HCT116 (cell line): ENCODE measurements at regions of chr10 and their contacts with region 1.

Region 1: DNA sequence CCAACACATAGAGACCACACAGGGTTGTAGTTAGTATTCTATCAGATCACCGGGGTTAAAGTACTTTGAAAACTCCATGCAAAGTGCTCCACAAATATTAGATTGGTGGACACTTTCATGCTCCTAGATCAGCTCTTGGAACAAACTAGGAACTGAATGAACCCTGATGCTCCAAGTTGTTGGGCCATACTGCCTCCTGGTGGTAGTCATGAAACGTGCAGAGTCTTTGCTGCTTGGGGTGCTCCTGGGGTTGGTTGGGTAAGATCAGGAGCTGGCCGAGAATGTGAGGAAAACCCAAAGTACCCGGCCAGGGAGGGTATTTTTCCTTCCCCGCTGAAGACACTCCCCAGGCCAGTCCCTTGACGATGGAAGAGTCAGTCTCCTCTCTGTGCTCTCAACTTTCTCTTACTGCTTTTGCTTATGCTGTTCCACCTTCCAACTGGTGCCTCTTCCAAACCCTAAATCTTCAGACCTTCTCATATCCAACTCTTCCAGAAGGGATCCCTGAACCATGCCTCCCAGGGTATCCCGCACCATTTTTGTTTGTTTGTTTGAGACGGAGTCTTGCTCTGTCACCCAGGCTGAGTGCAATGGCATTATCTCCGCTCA is 920 bp upstream of the RPEL1 start:
- DNase-seq: peak; percentile 82
- ATAC-seq: peak; percentile 73
- H3K4me3 ChIP-seq: no peak overlapping the region
- H3K27ac ChIP-seq: no peak overlapping the region
- H3K4me1 ChIP-seq: peaks cover 27 to 36% of the 10 kb centered on the region in 2 experiments
- H3K27me3 ChIP-seq: no peaks in the 10 kb centered on the region
- CTCF ChIP-seq: peak in 2 of 3 experiments; percentile 95 to 99; a peak in 4 of 6 replicates
- POLR2A ChIP-seq: no peak
- RAD21 ChIP-seq: no peak

Region 2: GRCh38 chr10:102729029-102730026 is 515.4 kb before region 1 on chr10:
- CTCF ChIA-PET with region 1: no interaction called
- POLR2A ChIA-PET with region 1: no interaction called
- RAD21 ChIA-PET with region 1: no interaction called
- intact Hi-C with region 1: loop called (anchors 5 kb)
- DNase-seq: peak; percentile 49
- ATAC-seq: peak; percentile 99
- H3K4me3 ChIP-seq: no peak overlapping the region
- H3K27ac ChIP-seq: no peak overlapping the region
- H3K4me1 ChIP-seq: no peaks in the 10 kb centered on the region
- H3K27me3 ChIP-seq: no peaks in the 10 kb centered on the region
- CTCF ChIP-seq: peak; percentile 83 to 99 (median 99)
- POLR2A ChIP-seq: no peak
- RAD21 ChIP-seq: peak; percentile 95

Region 3: GRCh38 chr10:102894466-102895213 is 350.1 kb before region 1 on chr10:
- CTCF ChIA-PET with region 1: no interaction called
- POLR2A ChIA-PET with region 1: no interaction called
- RAD21 ChIA-PET with region 1: no interaction called
- intact Hi-C with region 1: no loop called
- DNase-seq: no peak
- ATAC-seq: no peak
- H3K4me3 ChIP-seq: no peak overlapping the region
- H3K27ac ChIP-seq: no peak overlapping the region
- H3K4me1 ChIP-seq: no peaks in the 10 kb centered on the region
- H3K27me3 ChIP-seq: no peaks in the 10 kb centered on the region
- CTCF ChIP-seq: no peak
- POLR2A ChIP-seq: no peak
- RAD21 ChIP-seq: no peak

Region 4: DNA sequence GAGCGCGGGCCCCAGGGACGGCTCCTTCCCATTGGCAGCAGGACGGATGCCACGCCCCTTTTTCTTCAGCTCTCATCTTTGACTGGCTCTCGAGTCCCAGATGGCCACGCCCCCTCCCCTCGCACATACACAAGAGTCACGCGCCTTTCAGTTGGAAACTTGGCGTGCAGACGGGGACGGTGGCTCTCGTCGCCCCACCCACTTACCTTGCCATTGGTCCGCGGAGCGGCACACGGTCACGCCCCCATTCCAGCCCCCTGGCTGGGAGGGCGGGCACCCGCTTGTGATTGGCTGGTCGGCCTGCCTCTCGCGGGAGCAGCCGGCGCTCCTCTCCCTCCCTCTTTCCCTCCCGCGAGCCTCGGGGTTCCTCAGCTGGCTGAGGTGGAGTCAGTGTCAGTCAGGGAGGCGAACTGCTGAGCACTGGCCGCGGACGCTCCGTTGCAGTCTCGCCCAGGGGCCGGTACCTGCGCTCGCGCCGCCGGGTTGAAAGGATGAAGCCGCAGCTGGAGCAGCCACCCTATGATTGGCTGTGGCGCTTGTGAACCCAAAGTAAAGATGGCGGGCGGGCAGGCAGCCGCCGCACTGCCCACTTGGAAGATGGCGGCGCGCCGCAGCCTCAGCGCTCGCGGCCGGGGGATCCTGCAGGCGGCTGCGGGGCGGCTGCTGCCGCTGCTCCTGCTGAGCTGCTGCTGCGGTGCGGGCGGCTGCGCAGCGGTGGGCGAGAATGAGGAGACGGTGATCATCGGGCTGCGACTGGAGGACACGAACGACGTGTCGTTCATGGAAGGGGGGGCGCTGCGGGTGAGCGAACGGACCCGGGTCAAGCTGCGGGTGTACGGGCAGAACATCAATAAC is 326.6 kb before region 1 on chr10 and contains the start of gene CNNM2:
- CTCF ChIA-PET with region 1: interaction called, 59 read pairs
- POLR2A ChIA-PET with region 1: interaction called, 4 read pairs
- RAD21 ChIA-PET with region 1: interaction called, 27 to 29 read pairs
- intact Hi-C with region 1: loop called (anchors 1 kb)
- DNase-seq: peak; percentile 100
- ATAC-seq: peak; percentile 87
- H3K4me3 ChIP-seq: peak within 1 kb of the TSS; percentile 71 to 85
- H3K27ac ChIP-seq: peak within 1 kb of the TSS; percentile 77
- H3K4me1 ChIP-seq: peaks cover 12 to 24% of the 10 kb centered on the region in 2 experiments
- H3K27me3 ChIP-seq: no peaks in the 10 kb centered on the region
- CTCF ChIP-seq: no peak
- POLR2A ChIP-seq: peak; percentile 86
- RAD21 ChIP-seq: no peak
- total RNA-seq, gene CNNM2: 23.1 TPM

Region 5: DNA sequence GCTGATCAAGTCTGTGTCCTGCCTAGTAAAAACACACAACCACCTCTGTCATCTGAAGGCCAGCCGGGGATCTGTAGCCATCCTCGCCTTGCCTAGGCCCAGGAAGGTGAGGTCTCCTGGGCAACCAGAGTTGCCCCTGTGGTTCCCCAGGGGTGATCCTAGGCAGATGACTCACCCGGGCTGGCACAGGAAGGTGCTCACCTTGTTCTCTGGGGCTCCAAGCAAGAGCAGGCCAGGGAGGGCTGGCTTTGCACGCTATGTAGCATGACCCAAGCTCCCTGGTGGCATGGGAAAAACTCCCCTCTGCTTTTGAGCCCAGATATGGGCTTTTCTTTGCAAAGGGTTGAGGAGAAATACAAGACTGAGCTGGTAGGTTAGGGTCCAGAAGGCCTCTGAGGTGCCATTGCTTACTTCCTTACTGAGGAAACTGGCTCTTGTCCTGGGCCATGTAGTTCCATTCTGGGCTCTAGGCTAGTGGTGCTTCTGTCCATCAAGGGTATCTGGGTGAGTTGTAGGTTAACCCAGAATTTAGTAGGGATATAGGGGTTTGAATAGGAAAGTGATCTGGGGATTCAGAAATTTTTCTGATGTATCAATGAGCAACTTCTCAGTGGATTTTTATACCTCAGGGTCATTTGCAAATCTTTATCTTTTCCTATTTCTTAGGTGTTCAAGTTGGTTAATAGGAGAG is 163.7 kb before region 1 on chr10:
- CTCF ChIA-PET with region 1: interaction called, 8 read pairs
- POLR2A ChIA-PET with region 1: no interaction called
- RAD21 ChIA-PET with region 1: interaction called in 1 of 2 experiments, 3 read pairs
- intact Hi-C with region 1: loop called (anchors 5 kb)
- DNase-seq: no peak
- ATAC-seq: peak; percentile 44
- H3K4me3 ChIP-seq: no peak overlapping the region
- H3K27ac ChIP-seq: no peak overlapping the region
- H3K4me1 ChIP-seq: peaks cover 0 to 5% of the 10 kb centered on the region in 2 experiments; a peak in 1 of 4 replicates
- H3K27me3 ChIP-seq: no peaks in the 10 kb centered on the region
- CTCF ChIP-seq: no peak
- POLR2A ChIP-seq: no peak
- RAD21 ChIP-seq: no peak

Region 6: DNA sequence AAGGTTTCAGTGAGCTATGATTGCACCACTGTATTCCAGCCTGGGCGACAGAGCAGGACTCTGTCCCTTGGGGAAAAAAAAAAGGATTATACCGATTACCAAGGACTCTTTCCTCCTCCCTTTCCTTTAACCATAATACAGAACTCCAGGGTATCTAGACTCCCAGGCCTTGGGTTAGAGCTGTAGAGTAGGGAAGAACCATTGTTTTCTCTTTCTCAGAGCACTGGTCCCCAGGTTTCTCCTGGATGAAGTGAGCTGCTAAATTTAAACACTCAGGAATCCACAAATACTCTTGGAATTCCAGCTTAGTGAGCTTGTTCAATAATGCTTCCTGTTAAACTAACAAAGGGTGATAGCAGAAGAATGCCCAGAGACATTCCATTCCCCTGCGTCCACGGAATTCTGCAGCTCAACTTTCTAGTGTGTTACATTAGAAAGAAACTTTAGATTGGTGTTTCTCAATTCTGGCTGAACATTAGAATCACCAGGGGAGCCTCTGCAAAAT is 13.7 kb before region 1 on chr10:
- CTCF ChIA-PET with region 1: interaction called, 27 read pairs
- POLR2A ChIA-PET with region 1: interaction called, 32 read pairs
- RAD21 ChIA-PET with region 1: interaction called, 3 to 7 read pairs
- intact Hi-C with region 1: no loop called
- DNase-seq: peak; percentile 49
- ATAC-seq: peak; percentile 65
- H3K4me3 ChIP-seq: peak overlapping the region; percentile 2 to 38; a peak in 3 of 4 replicates
- H3K27ac ChIP-seq: peak overlapping the region; percentile 89
- H3K4me1 ChIP-seq: peaks cover 53 to 75% of the 10 kb centered on the region in 2 experiments
- H3K27me3 ChIP-seq: no peaks in the 10 kb centered on the region
- CTCF ChIP-seq: no peak
- POLR2A ChIP-seq: no peak
- RAD21 ChIP-seq: no peak; the same call in 1 of the 2 replicates

Region 7: GRCh38 chr10:103396064-103396788 is 151.5 kb after region 1 on chr10 and contains the starts of genes ATP5MK and PDCD11:
- CTCF ChIA-PET with region 1: interaction called, 3 read pairs
- POLR2A ChIA-PET with region 1: no interaction called
- RAD21 ChIA-PET with region 1: no interaction called
- intact Hi-C with region 1: loop called (anchors 2 kb)
- DNase-seq: peak; percentile 98
- ATAC-seq: peak; percentile 99
- H3K4me3 ChIP-seq: peak within 1 kb of the TSS; percentile 83 to 95
- H3K27ac ChIP-seq: peak within 1 kb of the TSS; percentile 71
- H3K4me1 ChIP-seq: peaks cover 13 to 27% of the 10 kb centered on the region in 2 experiments; a peak in 3 of 4 replicates
- H3K27me3 ChIP-seq: no peaks in the 10 kb centered on the region
- CTCF ChIP-seq: peak in 2 of 3 experiments; percentile 33 to 35; a peak in 3 of 6 replicates
- POLR2A ChIP-seq: peak; percentile 95
- RAD21 ChIP-seq: no peak
- total RNA-seq, gene ATP5MK: 556 TPM
- total RNA-seq, gene PDCD11: 106 TPM